Ascending aorta (tissue), 2 donors: ENCODE measurements at regions of chr10 and their contacts with region 1.

Region 1: GRCh38 chr10:75099952-75100763 is 11.3 kb upstream of the SAMD8 start:
- DNase-seq: peak in 1 of 2 donors; percentile 82
- H3K4me3 ChIP-seq: no peak overlapping the region
- H3K27ac ChIP-seq: no peak overlapping the region
- H3K4me1 ChIP-seq: no peaks in the 10 kb centered on the region
- H3K27me3 ChIP-seq: no peaks in the 10 kb centered on the region
- CTCF ChIP-seq: peak; percentile 96 to 98 (median 98)

Region 2: DNA sequence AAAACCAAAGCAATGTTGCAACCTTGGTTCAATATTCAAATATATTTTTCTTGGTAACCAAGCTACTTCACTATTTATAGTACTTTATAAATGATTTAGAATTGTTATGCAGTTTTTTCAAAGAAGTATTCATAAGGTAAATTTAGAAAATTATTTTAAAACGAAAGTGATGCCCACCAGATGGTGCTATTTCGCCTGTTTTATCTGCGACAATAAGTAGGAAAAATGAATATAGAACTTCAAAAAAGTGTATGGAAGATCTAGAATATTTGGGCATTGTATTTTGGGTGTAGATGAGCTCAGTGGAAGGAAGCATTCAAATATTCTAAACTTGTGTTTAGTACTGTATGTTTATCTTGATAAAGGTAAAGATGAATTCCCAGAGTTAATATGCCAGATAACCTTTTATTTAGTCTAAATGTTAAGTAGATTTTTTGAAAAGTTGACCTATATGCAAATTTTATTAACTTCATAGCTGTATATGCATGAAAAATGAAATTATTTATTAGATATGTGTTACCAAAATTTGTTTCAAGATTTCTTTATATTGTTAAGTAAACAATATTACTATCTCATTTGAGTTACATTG is 856.0 kb before region 1 on chr10:
- intact Hi-C with region 1: loop called (anchors 2 kb)
- DNase-seq: no peak
- H3K4me3 ChIP-seq: no peak overlapping the region
- H3K27ac ChIP-seq: no peak overlapping the region
- H3K4me1 ChIP-seq: no peaks in the 10 kb centered on the region
- H3K27me3 ChIP-seq: no peaks in the 10 kb centered on the region
- CTCF ChIP-seq: peak; percentile 2 to 54 (median 45)